Breast epithelium (tissue), 4 donors: ENCODE measurements at regions of chr9 and their contacts with region 1.

Region 1: GRCh38 chr9:68951879-68952659 is 61.8 kb downstream of the PRKACG start:
- DNase-seq: no peak
- H3K4me3 ChIP-seq: no peak overlapping the region
- H3K27ac ChIP-seq: no peak overlapping the region
- H3K4me1 ChIP-seq: no peaks in the 10 kb centered on the region
- H3K27me3 ChIP-seq: no peaks in the 10 kb centered on the region
- CTCF ChIP-seq: no peak
- POLR2A ChIP-seq: no peak

Region 2: GRCh38 chr9:69425136-69425798 is 473.2 kb after region 1 on chr9:
- intact Hi-C with region 1: loop called (anchors 5 kb)
- DNase-seq: no peak
- H3K4me3 ChIP-seq: no peak overlapping the region
- H3K27ac ChIP-seq: no peak overlapping the region
- H3K4me1 ChIP-seq: no peaks in the 10 kb centered on the region
- H3K27me3 ChIP-seq: no peaks in the 10 kb centered on the region
- CTCF ChIP-seq: no peak
- POLR2A ChIP-seq: no peak